Posterior vena cava (tissue), 2 donors: ENCODE measurements at regions of chr5 and their contacts with region 1.

Region 1: GRCh38 chr5:158174918-158175851 is 316.2 kb upstream of the CLINT1 start:
- DNase-seq: peak; percentile 89

Region 2: DNA sequence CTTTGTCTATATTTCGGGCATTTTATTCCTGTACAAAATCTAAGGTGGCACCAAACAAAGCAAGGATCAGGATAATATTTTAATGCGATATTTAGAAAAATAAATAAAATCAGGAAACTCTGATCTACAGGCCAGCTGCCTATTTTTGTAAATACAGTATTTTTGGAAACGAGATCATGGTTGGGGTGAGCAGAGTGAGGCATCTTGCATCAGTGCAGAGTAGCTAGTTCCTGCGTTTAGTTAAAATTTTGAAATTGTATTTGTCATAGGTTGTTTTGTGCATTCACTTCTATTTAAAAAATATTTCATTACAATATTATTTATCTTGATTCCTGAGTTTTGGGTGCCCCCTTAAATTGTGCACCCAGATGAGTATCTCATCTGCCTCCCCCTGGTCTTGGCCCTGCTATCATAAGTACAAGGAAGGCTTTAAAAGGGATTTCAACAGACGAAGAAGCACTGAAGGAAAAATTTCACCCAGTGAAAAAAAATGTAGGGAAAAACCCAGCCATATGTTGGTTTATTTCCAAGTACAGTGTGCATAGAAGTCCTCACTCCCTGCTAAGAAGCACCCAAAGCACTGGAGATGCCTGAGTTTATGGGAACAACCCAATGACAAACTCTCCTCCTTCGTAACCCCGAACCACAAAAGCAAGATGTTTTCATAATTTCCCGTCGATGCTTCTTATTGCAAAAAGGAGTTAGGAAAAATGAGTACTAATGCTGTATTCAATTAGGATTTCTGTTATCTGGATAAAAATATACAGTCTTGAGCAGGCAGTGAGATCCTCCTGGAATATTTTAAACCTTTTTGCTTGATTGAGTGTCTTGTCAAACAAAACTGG is 11.5 kb before region 1 on chr5:
- intact Hi-C with region 1: no loop called
- DNase-seq: no peak

Region 3: DNA sequence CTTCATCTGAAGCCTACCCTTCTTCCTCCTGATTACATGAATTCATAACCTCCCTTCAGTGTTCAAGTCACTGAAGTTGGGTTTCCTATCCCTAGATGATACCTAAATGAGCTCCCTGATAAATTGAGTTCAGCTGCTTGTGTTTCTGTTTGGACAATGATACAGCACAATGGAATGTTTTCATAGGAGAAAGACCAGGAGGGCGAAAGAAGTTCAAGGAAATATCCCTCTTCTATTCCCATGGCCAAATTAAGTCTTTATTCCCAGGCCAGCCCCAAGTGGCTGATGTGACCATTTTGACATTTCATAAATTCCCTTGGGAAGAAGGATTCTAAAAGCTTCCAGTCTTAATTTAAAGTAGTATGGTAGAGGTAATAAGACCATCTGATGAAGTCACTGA is 239.6 kb after region 1 on chr5:
- intact Hi-C with region 1: no loop called
- DNase-seq: no peak

Region 4: GRCh38 chr5:158686214-158686613 is 511.0 kb after region 1 on chr5:
- intact Hi-C with region 1: loop called in 1 of 2 experiments (anchors 5 kb)
- DNase-seq: no peak

Region 5: DNA sequence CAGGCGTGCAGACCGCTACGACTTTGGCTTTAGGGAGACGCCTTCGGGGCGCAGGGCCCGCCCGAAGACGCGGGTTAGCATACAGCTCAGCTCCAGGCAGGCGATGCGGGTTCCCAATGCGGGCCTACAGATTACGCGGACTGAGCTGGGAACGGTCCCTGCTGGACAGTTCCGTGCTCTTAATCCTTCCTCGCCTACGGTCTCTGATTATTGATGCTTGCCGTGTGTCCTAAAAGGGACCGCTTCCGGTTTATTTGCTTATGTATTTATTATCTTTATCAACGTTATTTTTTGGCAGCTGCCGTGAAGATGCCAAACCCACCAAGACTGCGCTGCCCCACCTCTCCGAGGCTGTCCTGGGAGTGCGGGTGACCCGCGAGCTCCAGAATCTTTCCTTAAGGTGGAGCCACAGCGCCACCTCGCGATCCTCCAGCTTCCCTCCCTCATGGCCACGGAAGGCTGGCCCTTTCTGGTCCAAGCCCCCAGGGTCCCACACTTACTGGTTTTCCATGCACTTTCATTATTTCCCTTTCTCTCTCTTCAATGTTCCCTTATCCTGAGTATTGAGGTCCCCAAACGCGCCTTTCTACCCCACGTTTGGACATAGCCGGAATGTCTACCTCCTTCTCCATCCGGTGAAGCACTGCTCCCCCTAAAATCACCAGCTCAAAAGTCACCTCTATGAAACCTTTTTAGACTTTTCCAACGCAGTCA is 931.5 kb after region 1 on chr5:
- intact Hi-C with region 1: loop called in 1 of 2 experiments (anchors 5 kb)
- DNase-seq: peak; percentile 94